HEK293 (cell line): ENCODE measurements at regions of chr17 and their contacts with region 1.

Region 1: DNA sequence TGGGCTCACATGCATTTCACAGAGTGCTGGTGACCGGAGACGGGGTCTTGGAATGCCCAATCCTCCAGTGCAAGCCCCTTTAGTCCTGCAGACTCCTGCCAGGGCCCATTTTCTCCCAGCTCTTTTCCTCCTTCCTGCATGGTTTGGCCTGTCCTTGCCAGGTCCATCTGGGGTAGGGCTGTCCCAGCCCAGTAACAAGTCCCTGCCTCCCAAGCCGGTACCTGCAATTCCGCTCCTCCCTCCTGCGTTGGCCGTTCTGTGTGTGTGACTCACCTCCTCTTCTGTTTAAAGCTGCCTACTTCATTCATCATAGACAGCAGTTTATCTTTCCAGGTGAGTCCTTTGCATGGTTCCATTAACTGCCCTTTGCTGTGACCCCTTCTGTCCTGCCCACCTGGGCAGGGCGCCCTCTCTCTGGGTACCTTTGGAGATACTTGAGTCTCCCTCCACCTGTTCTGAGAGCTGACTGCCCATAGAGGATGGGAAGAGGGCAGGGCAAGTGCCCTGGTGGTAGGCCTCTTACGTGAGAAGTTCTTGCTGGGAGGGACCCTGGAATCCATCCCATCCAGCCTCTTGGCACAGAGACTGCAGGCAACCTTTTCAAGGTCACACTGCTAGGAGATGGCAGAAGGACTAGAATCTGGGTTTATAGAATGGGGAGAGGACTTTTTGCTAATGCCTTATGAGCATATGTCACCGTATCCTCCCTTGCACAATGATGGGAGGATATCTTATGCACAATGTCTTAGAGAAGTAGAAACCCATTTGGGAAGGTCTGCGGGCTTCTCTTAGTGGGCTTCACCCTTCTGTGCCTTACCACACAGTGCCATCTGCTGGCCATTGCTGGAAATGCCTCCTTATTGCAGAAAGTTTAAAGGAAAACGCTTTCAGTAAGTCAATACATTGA is 29.7 kb upstream of the LGALS9 start:
- H3K4me3 ChIP-seq: no peak overlapping the region
- H3K27ac ChIP-seq: no peak overlapping the region
- H3K4me1 ChIP-seq: no peaks in the 10 kb centered on the region
- CTCF ChIP-seq: peak; percentile 62

Region 2: DNA sequence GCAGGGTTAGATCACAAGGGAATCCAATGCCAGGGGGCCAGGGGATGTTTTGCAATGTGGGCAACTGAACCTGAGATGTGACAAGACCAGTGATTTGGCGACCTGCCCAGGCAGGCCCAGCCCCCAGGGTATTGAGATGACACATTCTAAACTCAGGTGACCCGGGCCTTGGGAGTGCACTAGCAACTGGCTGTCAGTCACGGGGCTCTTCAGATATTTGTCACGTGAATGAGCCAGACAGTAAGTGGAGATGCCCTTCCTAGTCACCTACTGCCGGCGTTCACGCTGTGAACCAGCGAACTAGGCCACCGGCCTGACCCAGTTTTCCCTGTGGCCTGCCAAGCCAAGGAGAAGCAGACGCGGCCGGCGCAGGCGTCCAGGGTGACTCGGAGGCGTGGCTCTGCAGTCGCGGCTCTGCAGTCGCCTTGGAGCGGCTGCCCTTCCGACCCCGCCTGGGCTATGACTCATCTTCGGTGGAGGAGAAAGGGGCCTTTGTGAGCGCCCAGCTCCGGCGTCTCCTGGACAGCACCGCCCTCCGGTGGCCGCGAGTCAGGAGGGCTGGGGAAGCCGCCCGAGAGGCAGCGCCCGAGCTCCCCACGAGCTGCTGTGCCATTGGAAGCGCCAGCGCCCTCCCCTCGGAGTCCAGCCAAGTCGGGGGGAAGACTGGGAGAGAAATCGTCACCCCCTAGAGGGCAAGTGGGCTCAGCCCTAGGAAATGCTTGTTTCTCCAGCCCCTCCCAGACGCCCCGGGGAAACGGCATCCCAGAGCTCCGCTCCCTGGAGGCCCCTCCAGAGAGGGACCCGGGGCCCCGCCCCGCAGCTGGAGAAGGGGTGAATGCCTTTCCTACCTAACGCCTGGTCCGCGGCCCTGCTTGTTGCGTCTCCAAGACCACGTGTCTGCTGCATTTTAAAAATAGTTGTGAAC is 268.6 kb before region 1 on chr17:
- CTCF ChIA-PET with region 1: interaction called, 25 read pairs
- POLR2A ChIA-PET with region 1: interaction called, 5 read pairs
- H3K4me3 ChIP-seq: peak overlapping the region; percentile 48
- H3K27ac ChIP-seq: peak overlapping the region; percentile 84
- H3K4me1 ChIP-seq: peaks cover 2% of the 10 kb centered on the region; the same call in 1 of the 2 replicates
- CTCF ChIP-seq: peak; percentile 99

Region 3: GRCh38 chr17:27407916-27408846 is 193.1 kb before region 1 on chr17:
- CTCF ChIA-PET with region 1: interaction called, 16 read pairs
- POLR2A ChIA-PET with region 1: no interaction called
- H3K4me3 ChIP-seq: no peak overlapping the region
- H3K27ac ChIP-seq: no peak overlapping the region
- H3K4me1 ChIP-seq: no peaks in the 10 kb centered on the region
- CTCF ChIP-seq: no peak

Region 4: DNA sequence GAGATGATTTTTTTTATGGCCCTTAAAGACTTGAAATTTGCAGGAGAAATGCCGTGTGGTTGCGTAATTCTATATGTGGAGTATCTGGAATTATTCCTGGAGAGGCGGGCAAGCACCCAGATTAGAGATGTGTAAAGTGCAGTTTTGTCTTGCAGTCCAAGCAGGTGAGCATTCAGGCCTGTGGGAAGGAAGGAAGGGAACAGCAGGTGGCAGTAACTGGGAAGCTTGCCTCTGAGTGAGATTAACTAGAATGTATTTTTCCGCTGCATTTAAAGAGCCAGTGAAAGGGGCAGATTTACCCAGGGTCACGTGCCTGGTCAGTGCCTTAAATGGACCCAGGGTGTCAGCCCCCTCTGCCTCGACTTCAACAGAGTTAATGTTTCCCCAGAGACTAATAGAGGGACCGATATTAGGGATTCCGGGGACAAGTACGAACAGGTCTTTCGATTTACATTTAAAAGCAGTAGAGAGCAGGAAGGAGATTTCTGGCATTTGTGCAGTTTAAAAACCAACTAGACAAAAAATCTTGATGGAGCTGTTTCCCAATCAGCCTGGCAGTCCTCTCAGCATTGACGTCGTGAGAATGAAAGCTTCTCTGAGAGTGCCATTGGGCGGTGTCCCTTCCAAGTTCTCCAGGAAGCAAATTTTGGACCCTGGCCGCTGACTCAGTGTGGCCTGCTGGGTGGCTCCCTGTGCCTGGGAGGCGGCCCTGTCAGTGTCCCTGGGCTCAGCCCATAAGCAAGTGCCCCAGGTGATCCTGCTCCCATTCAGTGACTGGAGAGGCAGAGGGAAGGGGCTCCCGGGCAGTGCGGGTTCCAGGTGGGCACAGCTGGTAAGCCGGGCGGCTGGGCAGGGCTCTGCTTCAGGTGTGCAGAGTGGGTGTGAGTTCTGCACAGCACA is 106.9 kb before region 1 on chr17:
- CTCF ChIA-PET with region 1: interaction called, 42 read pairs
- POLR2A ChIA-PET with region 1: no interaction called
- H3K4me3 ChIP-seq: no peak overlapping the region
- H3K27ac ChIP-seq: no peak overlapping the region
- H3K4me1 ChIP-seq: peaks cover 15% of the 10 kb centered on the region
- CTCF ChIP-seq: 0 out of 2 replicates have a peak, but pooled peaks have one; percentile 20

Region 5: GRCh38 chr17:27559506-27560481 is 41.5 kb before region 1 on chr17:
- CTCF ChIA-PET with region 1: interaction called, 20 read pairs
- POLR2A ChIA-PET with region 1: no interaction called
- H3K4me3 ChIP-seq: no peak overlapping the region
- H3K27ac ChIP-seq: peak overlapping the region; percentile 22; the same call in 1 of the 2 replicates
- H3K4me1 ChIP-seq: peaks cover 15% of the 10 kb centered on the region
- CTCF ChIP-seq: no peak

Region 6: DNA sequence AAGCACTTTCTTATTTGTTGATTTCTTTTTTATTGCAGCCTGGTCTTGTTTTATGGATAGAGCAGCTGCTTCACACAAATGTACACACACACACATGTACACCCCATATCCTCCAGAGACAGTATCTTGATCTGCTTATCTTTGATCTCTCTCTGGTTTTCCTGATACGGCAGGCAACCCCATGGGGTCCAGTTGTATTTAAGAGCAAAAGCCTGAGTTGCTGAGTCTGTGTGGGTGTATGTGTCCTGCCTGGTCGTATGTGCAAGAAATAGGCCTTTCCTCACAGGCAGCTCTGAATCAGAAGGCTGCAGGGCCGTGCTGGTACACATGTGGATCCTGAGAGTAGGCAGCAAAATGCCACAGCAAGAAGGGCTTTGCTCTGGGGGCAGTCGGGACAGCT is 15.1 kb after region 1 on chr17:
- CTCF ChIA-PET with region 1: interaction called, 40 read pairs
- POLR2A ChIA-PET with region 1: no interaction called
- H3K4me3 ChIP-seq: no peak overlapping the region
- H3K27ac ChIP-seq: no peak overlapping the region
- H3K4me1 ChIP-seq: no peaks in the 10 kb centered on the region
- CTCF ChIP-seq: no peak

Region 7: DNA sequence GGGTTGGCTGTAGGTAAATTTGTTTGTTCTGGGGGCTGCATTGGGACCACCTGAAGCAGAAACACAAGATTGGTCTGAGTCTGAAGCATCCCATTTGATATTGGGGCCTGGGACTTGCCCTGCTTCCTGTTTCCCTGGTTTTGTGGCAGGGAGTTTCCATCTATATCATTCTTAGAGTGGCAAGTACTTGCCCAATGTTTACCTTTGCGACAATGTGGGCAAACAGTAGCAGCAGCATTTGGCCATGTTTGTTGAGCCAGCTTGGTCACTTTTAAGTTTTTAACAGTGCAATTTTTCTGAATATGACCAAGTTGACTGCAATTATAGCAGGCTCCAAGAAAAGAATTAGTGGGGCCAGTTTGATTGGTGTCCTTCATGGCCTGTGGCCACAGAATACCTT is 91.4 kb after region 1 on chr17:
- CTCF ChIA-PET with region 1: no interaction called
- POLR2A ChIA-PET with region 1: no interaction called
- H3K4me3 ChIP-seq: no peak overlapping the region
- H3K27ac ChIP-seq: peak overlapping the region; percentile 17; the same call in 1 of the 2 replicates
- H3K4me1 ChIP-seq: peaks cover 41% of the 10 kb centered on the region
- CTCF ChIP-seq: no peak

Region 8: GRCh38 chr17:27818401-27819105 is 217.2 kb after region 1 on chr17:
- CTCF ChIA-PET with region 1: no interaction called
- POLR2A ChIA-PET with region 1: no interaction called
- H3K4me3 ChIP-seq: no peak overlapping the region
- H3K27ac ChIP-seq: no peak overlapping the region
- H3K4me1 ChIP-seq: no peaks in the 10 kb centered on the region
- CTCF ChIP-seq: no peak